BJ (cell line): ENCODE measurements at regions of chr11 and their contacts with region 1.

Region 1: DNA sequence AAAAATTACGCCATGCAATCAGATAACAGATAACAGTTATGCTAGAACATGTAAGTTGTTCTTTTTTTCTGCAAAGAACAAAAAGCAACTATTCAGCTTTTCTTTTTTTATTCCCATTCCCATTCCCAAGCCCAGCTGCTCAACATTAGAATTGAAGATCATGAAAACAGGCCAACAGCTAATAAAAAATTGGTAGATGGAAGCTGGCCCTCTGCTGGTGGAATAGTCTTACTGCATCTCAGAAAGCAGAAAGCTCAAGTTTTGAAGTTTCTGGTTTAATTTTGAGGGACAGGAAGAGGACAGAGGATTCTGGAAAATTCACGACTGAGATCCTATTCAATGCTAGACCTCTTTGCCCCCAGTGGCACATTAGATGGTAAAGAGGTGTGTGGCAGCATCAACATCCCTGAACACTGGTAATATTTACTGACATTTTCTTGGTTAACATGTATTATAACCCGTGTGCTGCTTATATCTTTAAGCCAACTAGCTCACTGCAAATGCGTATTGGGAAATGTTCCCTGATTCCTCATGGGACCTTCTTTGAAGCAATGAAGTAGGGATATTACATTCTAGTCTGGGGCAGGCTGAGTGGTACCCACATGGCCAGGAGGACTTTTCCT is 591.2 kb downstream of the OPCML start:
- DNase-seq: peak; percentile 1
- H3K4me3 ChIP-seq: no peak overlapping the region
- H3K27me3 ChIP-seq: peaks cover 5% of the 10 kb centered on the region; the same call in 1 of the 2 replicates
- CTCF ChIP-seq: peak; percentile 85

Region 2: DNA sequence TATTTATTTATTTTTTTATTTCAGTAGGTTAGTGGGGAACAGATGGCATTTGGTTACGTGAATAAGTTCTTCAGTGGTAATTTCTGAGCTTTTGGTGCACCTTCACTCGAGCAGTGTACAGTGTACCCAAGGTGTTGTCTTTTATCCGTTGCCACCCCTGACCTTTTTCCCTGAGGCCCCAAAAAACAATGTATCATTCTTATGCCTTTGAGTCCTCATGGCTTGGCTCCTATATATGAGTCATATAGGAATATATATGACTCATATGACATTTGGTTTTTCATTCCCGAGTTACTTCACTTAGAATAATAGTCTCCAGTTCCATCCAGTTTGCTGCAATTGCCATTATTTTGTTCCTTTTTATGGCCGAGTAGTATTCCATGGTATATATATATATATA is 806.8 kb before region 1 on chr11:
- CTCF ChIA-PET with region 1: no interaction called
- POLR2A ChIA-PET with region 1: no interaction called
- DNase-seq: no peak
- H3K4me3 ChIP-seq: no peak overlapping the region
- H3K27me3 ChIP-seq: no peaks in the 10 kb centered on the region
- CTCF ChIP-seq: no peak

Region 3: GRCh38 chr11:132278801-132279574 is 662.1 kb before region 1 on chr11:
- CTCF ChIA-PET with region 1: interaction called, 21 read pairs
- POLR2A ChIA-PET with region 1: no interaction called
- DNase-seq: no peak
- H3K4me3 ChIP-seq: no peak overlapping the region
- H3K27me3 ChIP-seq: no peaks in the 10 kb centered on the region
- CTCF ChIP-seq: peak; percentile 68

Region 4: DNA sequence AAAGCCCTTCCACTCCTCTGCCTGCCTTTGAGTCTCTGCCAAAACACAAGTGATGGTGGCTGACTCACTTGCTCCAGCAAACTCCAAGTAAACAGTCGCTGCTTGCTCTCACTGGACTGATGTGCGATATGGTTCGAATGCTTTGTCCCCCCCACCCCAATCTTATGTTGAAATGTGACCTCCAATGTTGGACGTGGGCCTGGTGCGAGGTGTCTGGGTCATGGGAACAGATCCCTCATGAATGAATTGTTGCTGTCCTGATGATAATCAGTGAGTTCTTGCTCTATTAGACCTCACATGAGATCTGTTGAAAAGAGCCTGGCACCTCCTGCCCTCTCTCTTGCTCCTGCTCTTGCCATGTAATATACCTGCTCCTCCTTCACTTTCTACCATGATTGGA is 156.7 kb before region 1 on chr11:
- CTCF ChIA-PET with region 1: no interaction called
- POLR2A ChIA-PET with region 1: no interaction called
- DNase-seq: no peak
- H3K4me3 ChIP-seq: no peak overlapping the region
- H3K27me3 ChIP-seq: no peaks in the 10 kb centered on the region
- CTCF ChIP-seq: no peak

Region 5: DNA sequence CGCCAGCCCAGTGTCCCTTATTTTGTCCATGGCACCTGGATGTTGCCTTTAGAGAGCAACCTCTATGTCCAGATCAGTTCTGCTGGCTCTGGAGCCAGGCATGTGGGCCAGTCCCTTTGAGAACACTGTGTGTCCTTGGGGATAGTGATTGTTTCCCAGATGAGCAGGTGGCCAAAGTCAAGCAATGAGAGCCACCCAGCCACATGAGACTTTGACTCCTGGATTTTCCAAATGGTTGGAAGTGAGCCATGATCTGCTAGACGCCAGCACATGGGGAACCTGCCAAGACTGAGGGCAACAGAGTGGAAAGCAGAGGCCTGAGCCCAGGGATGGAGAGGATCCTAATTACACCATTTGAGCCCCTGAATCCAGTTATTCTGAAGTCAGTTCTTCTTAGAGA is 111.4 kb after region 1 on chr11:
- CTCF ChIA-PET with region 1: no interaction called
- POLR2A ChIA-PET with region 1: no interaction called
- DNase-seq: no peak
- H3K4me3 ChIP-seq: no peak overlapping the region
- H3K27me3 ChIP-seq: peaks cover 1% of the 10 kb centered on the region
- CTCF ChIP-seq: no peak